GM12878 (cell line): ENCODE measurements at regions of chr3 and their contacts with region 1.

Region 1: DNA sequence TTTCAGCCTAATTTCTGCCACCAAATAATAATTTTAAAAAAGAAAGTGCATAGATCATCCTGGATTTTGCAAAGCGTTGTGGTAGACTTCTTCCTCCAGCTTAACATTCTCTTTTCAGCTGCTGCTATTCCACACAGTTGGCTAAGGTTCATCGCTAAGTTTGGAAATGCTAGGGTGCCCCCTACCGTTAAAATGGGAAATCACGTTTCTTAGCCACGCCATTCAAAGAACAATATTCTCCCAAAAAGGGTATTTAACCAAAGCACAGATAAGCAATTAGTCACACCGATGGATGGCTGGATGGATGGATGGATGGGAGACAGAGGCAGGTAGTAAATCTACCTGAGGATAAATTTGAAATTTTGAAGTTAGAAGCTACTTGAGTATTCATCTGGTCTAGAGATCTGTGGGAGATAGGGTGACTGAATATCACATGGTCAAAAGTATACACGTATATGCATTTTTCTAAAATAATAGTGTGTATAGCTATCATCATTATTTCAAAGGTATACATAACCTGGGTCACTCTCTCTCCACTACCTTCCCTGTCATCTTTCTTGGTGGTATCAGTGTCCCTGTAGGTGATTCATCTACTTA is 67.2 kb downstream of the EFHB start:
- DNase-seq: peak; percentile 19
- ATAC-seq: peak; percentile 92
- H3K4me3 ChIP-seq: no peak overlapping the region
- H3K27ac ChIP-seq: no peak overlapping the region
- H3K4me1 ChIP-seq: no peaks in the 10 kb centered on the region
- H3K27me3 ChIP-seq: no peaks in the 10 kb centered on the region
- CTCF ChIP-seq: peak; percentile 67 to 79 (median 76)
- EP300 ChIP-seq: no peak
- POLR2A ChIP-seq: no peak
- RAD21 ChIP-seq: peak; percentile 96

Region 2: GRCh38 chr3:18847583-18848197 is 1019.2 kb before region 1 on chr3:
- CTCF ChIA-PET with region 1: interaction called, 14 read pairs
- POLR2A ChIA-PET with region 1: no interaction called
- RAD21 ChIA-PET with region 1: interaction called, 4 read pairs
- SMC1A ChIA-PET with region 1: interaction called, 5 read pairs
- in situ Hi-C with region 1: loop called (anchors 25 kb)
- intact Hi-C with region 1: loop called (anchors 1 kb)
- DNase-seq: no peak
- ATAC-seq: peak; percentile 79
- H3K4me3 ChIP-seq: no peak overlapping the region
- H3K27ac ChIP-seq: no peak overlapping the region
- H3K4me1 ChIP-seq: no peaks in the 10 kb centered on the region
- H3K27me3 ChIP-seq: no peaks in the 10 kb centered on the region
- CTCF ChIP-seq: peak; percentile 39 to 42 (median 42); a peak in 4 of 6 replicates
- EP300 ChIP-seq: no peak
- POLR2A ChIP-seq: no peak
- RAD21 ChIP-seq: peak; percentile 35; the same call in 1 of the 2 replicates

Region 3: DNA sequence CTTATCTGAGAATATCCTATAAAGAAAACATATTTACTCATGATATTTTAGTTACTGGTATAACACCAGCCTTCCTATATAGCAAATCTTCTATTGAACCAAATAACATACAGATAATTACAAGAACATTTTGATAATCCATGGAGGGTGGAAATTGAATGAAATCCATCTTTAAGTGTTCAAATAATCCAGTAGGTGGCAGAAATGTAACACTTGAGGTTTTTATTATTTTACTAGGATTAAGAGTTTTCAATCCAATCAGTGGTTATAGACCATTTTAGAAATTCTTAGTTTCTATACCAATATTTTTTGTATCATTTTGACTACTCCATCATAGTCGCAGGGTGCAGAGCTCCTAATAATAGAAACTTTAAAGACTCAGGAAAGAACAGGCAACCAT is 820.4 kb before region 1 on chr3:
- CTCF ChIA-PET with region 1: no interaction called
- POLR2A ChIA-PET with region 1: no interaction called
- RAD21 ChIA-PET with region 1: no interaction called
- SMC1A ChIA-PET with region 1: no interaction called
- in situ Hi-C with region 1: no loop called
- intact Hi-C with region 1: loop called (anchors 5 kb)
- DNase-seq: no peak
- ATAC-seq: no peak
- H3K4me3 ChIP-seq: no peak overlapping the region
- H3K27ac ChIP-seq: no peak overlapping the region
- H3K4me1 ChIP-seq: no peaks in the 10 kb centered on the region
- H3K27me3 ChIP-seq: no peaks in the 10 kb centered on the region
- CTCF ChIP-seq: peak in 1 of 3 experiments; percentile 7; a peak in 1 of 6 replicates
- EP300 ChIP-seq: no peak
- POLR2A ChIP-seq: no peak
- RAD21 ChIP-seq: peak; percentile 23; the same call in 1 of the 2 replicates

Region 4: GRCh38 chr3:19213601-19214220 is 653.1 kb before region 1 on chr3:
- CTCF ChIA-PET with region 1: no interaction called
- POLR2A ChIA-PET with region 1: no interaction called
- RAD21 ChIA-PET with region 1: interaction called, 5 read pairs
- SMC1A ChIA-PET with region 1: interaction called, 5 read pairs
- in situ Hi-C with region 1: no loop called
- intact Hi-C with region 1: loop called (anchors 5 kb)
- DNase-seq: no peak
- ATAC-seq: peak; percentile 69
- H3K4me3 ChIP-seq: no peak overlapping the region
- H3K27ac ChIP-seq: no peak overlapping the region
- H3K4me1 ChIP-seq: no peaks in the 10 kb centered on the region
- H3K27me3 ChIP-seq: no peaks in the 10 kb centered on the region
- CTCF ChIP-seq: peak; percentile 24 to 35 (median 26); a peak in 3 of 6 replicates
- EP300 ChIP-seq: no peak
- POLR2A ChIP-seq: no peak
- RAD21 ChIP-seq: peak; percentile 55

Region 5: DNA sequence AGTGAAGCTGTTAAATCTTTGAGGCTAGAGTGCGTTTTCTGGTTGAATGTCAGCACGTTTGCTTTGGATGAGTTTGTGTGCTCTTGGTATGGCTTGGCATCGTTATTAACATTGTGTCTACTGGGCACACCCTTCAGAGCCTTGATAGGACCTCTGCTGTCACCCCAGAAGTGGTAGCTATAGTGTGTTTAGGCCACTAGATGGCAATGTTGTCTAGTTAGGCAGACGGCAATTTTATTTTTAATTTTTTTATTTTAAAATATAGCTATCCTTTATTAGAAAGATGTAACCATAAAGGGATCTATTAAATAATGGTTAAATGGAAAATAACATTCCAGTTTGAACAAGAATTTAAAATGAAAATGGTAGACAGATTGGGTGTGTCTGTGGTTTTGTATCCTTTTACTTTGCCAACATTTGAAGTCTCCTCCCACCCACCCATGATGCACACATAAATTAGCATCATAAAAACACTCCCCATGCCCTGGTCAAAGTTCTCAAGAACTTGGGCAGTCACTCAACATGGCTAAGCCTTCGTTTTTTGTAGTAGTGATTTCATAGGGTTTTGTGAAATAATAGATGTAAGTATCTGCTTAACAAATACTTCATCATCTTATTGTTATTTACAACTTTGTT is 517.8 kb before region 1 on chr3:
- CTCF ChIA-PET with region 1: interaction called, 72 read pairs
- POLR2A ChIA-PET with region 1: no interaction called
- RAD21 ChIA-PET with region 1: interaction called, 31 read pairs
- SMC1A ChIA-PET with region 1: interaction called, 53 read pairs
- in situ Hi-C with region 1: loop called (anchors 5 kb)
- intact Hi-C with region 1: loop called (anchors 1 kb)
- DNase-seq: no peak
- ATAC-seq: peak; percentile 97
- H3K4me3 ChIP-seq: no peak overlapping the region
- H3K27ac ChIP-seq: no peak overlapping the region
- H3K4me1 ChIP-seq: peaks cover 14% of the 10 kb centered on the region
- H3K27me3 ChIP-seq: no peaks in the 10 kb centered on the region
- CTCF ChIP-seq: peak; percentile 59 to 72 (median 70); a peak in 5 of 6 replicates
- EP300 ChIP-seq: no peak
- POLR2A ChIP-seq: no peak
- RAD21 ChIP-seq: peak; percentile 96

Region 6: GRCh38 chr3:19543212-19543841 is 323.5 kb before region 1 on chr3:
- CTCF ChIA-PET with region 1: interaction called, 5 read pairs
- POLR2A ChIA-PET with region 1: no interaction called
- RAD21 ChIA-PET with region 1: interaction called, 6 read pairs
- SMC1A ChIA-PET with region 1: interaction called, 3 read pairs
- in situ Hi-C with region 1: loop called (anchors 10 kb)
- intact Hi-C with region 1: loop called (anchors 5 kb)
- DNase-seq: peak; percentile 25
- ATAC-seq: peak; percentile 76
- H3K4me3 ChIP-seq: no peak overlapping the region
- H3K27ac ChIP-seq: 0 out of 2 replicates have a peak overlapping the region, but pooled peaks have one; percentile 47
- H3K4me1 ChIP-seq: peaks cover 46% of the 10 kb centered on the region
- H3K27me3 ChIP-seq: no peaks in the 10 kb centered on the region
- CTCF ChIP-seq: peak; percentile 79 to 83 (median 81)
- EP300 ChIP-seq: no peak
- POLR2A ChIP-seq: no peak
- RAD21 ChIP-seq: peak; percentile 92

Region 7: DNA sequence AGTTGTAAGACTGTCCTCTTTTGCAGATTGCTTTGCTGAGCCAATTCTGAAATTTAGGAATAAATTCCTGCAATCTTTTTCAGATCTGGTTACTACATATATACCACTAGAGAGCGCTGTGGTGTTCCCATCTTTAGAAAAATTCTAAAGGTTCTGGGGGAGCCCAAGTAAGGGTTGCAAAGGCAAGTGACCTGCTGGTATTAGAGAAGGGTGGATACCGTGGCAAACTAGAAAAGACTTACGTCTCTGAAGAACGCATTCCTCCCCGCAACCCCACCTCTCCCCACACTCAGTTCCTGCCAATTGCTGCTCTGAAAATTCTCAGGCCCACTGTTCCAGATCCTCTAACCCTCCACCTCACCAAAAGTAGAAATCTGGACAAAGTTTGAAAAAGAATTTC is 18.6 kb after region 1 on chr3:
- CTCF ChIA-PET with region 1: interaction called, 18 read pairs
- POLR2A ChIA-PET with region 1: no interaction called
- RAD21 ChIA-PET with region 1: no interaction called
- SMC1A ChIA-PET with region 1: interaction called, 3 read pairs
- in situ Hi-C with region 1: no loop called
- intact Hi-C with region 1: no loop called
- DNase-seq: no peak
- ATAC-seq: peak; percentile 82
- H3K4me3 ChIP-seq: no peak overlapping the region
- H3K27ac ChIP-seq: no peak overlapping the region
- H3K4me1 ChIP-seq: no peaks in the 10 kb centered on the region
- H3K27me3 ChIP-seq: no peaks in the 10 kb centered on the region
- CTCF ChIP-seq: peak; percentile 27 to 59 (median 48); a peak in 5 of 6 replicates
- EP300 ChIP-seq: no peak
- POLR2A ChIP-seq: no peak
- RAD21 ChIP-seq: peak; percentile 76